Dendritic cell treated with granulocyte-macrophage colony-stimulating factor and Interleukin-4, amounts not matched to agents 40 ng/mL and 50 ng/mL, for 4 days (primary cell): ENCODE measurements at regions of chr17 and their contacts with region 1.

Region 1: GRCh38 chr17:9971991-9972599 is 67.0 kb upstream of the RCVRN start:
- H3K4me3 Mint-ChIP-seq: no peak overlapping the region
- H3K27ac Mint-ChIP-seq: peak overlapping the region; percentile 16
- H3K4me1 Mint-ChIP-seq: peaks cover 55% of the 10 kb centered on the region
- H3K27me3 Mint-ChIP-seq: no peaks in the 10 kb centered on the region

Region 2: GRCh38 chr17:10226930-10227685 is 255.0 kb after region 1 on chr17:
- intact Hi-C with region 1: loop called (anchors 2 kb)
- H3K4me3 Mint-ChIP-seq: no peak overlapping the region
- H3K27ac Mint-ChIP-seq: no peak overlapping the region
- H3K4me1 Mint-ChIP-seq: peaks cover 23% of the 10 kb centered on the region
- H3K27me3 Mint-ChIP-seq: peaks cover 1% of the 10 kb centered on the region